ENCODE measurements at regions of chrX and their contacts with region 1.

Region 1: DNA sequence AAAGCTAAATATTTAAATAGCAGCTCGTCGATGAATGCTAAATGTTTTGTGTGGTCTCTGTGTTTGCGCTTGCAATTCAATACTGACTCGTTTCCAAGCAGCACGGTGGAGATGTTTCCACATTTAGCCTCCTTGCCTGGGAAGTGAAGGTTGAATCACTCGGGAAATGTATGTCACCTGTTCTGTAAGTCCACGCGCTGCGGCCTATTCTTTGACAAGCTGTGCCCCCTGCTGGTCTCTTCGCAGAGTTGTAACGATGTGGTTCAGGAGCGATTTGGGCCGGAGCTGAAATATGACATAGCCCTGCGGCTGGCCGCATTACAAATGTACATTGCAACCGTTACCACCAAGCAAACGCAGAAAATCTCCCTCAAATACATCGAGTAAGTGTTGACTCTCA is 89.6 kb upstream of the PRPS2 start:
- DNase-seq: peak; percentile 66
- ATAC-seq: peak; percentile 63
- H3K4me3 Mint-ChIP-seq: no peak overlapping the region
- H3K27ac Mint-ChIP-seq: no peak overlapping the region
- H3K4me1 Mint-ChIP-seq: no peaks in the 10 kb centered on the region
- H3K27me3 Mint-ChIP-seq: peaks cover 7% of the 10 kb centered on the region

Region 2: GRCh38 chrX:12080265-12080664 is 621.4 kb before region 1 on chrX:
- CTCF ChIA-PET with region 1: no interaction called
- POLR2A ChIA-PET with region 1: no interaction called
- intact Hi-C with region 1: loop called in 1 of 2 experiments (anchors 2 kb)
- DNase-seq: no peak
- ATAC-seq: no peak
- H3K4me3 Mint-ChIP-seq: no peak overlapping the region
- H3K27ac Mint-ChIP-seq: no peak overlapping the region
- H3K4me1 Mint-ChIP-seq: no peaks in the 10 kb centered on the region
- H3K27me3 Mint-ChIP-seq: peaks cover 6% of the 10 kb centered on the region

Region 3: DNA sequence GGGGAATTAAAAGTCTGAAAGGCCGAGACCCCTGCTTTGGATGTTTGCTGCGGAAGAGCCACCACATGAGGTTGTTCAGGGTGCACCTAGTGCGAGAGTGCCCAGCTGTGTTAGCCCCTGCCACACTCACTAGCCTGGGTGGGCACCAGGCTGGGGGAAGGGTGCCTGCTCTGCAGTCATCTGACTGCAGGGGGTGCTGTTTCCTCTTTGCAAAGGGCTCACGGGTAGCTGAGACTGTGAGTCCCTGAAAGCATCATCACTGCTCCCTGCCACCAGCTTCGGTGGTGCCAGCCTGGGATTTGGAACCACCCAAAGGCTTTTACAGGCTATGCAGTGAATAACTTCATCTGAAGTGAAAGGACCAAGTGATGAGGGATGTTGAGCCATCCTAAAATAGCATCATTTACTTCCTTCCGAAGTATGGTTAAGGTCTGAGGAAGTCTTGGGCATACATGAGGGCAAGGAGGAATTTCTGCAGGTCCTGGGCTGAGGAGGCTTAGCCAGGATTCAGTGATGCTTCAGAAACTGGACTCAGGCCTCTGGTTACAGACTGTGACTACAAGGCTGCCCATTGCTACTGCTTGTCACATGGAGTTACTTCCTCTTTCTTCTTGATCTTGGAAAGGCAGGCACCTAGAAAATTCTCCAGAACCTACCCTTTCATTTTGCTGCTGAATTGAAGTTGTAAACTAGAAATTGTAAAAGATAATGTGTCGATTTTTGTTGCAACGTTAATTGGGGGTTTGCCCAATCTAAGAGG is 203.6 kb before region 1 on chrX:
- CTCF ChIA-PET with region 1: no interaction called
- POLR2A ChIA-PET with region 1: no interaction called
- intact Hi-C with region 1: loop called in 1 of 2 experiments (anchors 1 kb)
- DNase-seq: peak; percentile 9
- ATAC-seq: no peak
- H3K4me3 Mint-ChIP-seq: no peak overlapping the region
- H3K27ac Mint-ChIP-seq: no peak overlapping the region
- H3K4me1 Mint-ChIP-seq: no peaks in the 10 kb centered on the region
- H3K27me3 Mint-ChIP-seq: no peaks in the 10 kb centered on the region

Region 4: DNA sequence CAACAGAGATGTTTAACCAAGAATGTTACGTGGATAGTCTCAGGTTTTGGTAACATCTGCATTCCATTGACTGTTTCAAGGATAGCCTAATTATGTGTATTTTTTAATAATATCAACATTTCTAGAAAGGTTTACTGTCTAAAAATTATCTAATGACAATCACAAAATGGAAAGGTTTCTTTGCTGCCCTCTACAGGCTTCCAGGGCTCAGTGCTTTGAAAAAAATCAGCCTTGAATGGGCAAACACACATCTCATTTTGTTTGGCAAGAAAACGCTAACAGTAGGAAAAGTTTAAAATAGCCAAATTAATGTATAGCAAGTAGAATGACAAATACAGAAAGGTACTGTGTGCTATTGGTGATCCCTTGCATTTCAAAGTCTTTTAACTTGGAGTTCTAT is 133.8 kb before region 1 on chrX:
- CTCF ChIA-PET with region 1: no interaction called
- POLR2A ChIA-PET with region 1: no interaction called
- intact Hi-C with region 1: loop called in 1 of 2 experiments (anchors 10 kb)
- DNase-seq: no peak
- ATAC-seq: no peak
- H3K4me3 Mint-ChIP-seq: no peak overlapping the region
- H3K27ac Mint-ChIP-seq: no peak overlapping the region
- H3K4me1 Mint-ChIP-seq: no peaks in the 10 kb centered on the region
- H3K27me3 Mint-ChIP-seq: no peaks in the 10 kb centered on the region

Region 5: DNA sequence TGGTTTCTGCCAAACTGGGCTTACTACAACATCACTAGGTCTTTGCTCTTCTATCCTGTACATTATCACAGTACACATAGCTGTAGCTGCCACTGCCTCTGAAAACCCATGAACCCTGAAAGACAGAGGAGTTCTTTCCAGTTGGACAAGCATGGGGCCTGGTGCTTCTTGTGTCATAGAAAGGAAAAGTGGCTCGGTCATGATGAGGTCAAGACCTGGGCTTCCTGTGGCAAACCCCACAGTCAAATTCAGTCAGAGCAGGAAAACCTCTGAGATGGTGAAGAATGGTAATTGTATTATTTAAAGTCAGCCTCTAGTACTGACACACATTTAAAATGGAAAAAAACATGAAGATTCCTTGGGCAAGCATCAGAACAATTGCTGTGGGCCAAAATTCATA is 43.7 kb before region 1 on chrX:
- CTCF ChIA-PET with region 1: no interaction called
- POLR2A ChIA-PET with region 1: no interaction called
- intact Hi-C with region 1: no loop called
- DNase-seq: no peak
- ATAC-seq: peak; percentile 16
- H3K4me3 Mint-ChIP-seq: no peak overlapping the region
- H3K27ac Mint-ChIP-seq: no peak overlapping the region
- H3K4me1 Mint-ChIP-seq: peaks cover 5% of the 10 kb centered on the region
- H3K27me3 Mint-ChIP-seq: no peaks in the 10 kb centered on the region

Region 6: GRCh38 chrX:12771445-12772069 is 69.9 kb after region 1 on chrX:
- CTCF ChIA-PET with region 1: interaction called, 5 read pairs
- POLR2A ChIA-PET with region 1: no interaction called
- intact Hi-C with region 1: loop called in 1 of 2 experiments (anchors 5 kb)
- DNase-seq: peak; percentile 85
- ATAC-seq: peak; percentile 100
- H3K4me3 Mint-ChIP-seq: no peak overlapping the region
- H3K27ac Mint-ChIP-seq: no peak overlapping the region
- H3K4me1 Mint-ChIP-seq: peaks cover 8% of the 10 kb centered on the region
- H3K27me3 Mint-ChIP-seq: peaks cover 5% of the 10 kb centered on the region

Region 7: GRCh38 chrX:12894074-12895030 is 192.7 kb after region 1 on chrX:
- CTCF ChIA-PET with region 1: interaction called, 4 read pairs
- POLR2A ChIA-PET with region 1: no interaction called
- intact Hi-C with region 1: loop called in 1 of 2 experiments (anchors 5 kb)
- DNase-seq: peak; percentile 67
- ATAC-seq: peak; percentile 28
- H3K4me3 Mint-ChIP-seq: no peak overlapping the region
- H3K27ac Mint-ChIP-seq: no peak overlapping the region
- H3K4me1 Mint-ChIP-seq: peaks cover 34% of the 10 kb centered on the region
- H3K27me3 Mint-ChIP-seq: no peaks in the 10 kb centered on the region

Region 8: DNA sequence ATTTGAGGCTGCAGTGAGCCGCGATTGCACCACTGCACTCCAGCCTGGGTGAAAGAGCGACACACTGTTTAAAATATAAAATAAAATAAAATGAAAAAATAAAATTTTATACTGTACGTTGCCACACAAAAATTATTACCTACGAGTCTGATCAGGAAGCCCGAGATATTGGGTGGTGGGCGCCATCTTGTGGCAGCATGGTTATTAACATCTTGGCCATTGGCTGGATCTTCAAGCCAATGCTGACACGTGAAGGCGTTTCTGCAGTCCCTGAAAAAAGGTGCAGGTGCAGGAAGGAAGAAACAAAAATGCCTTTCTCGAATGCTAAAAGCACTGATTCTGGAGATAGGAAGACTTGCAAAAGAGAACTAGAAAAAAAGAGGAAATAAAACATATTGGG is 199.9 kb after region 1 on chrX:
- CTCF ChIA-PET with region 1: interaction called, 4 read pairs
- POLR2A ChIA-PET with region 1: no interaction called
- intact Hi-C with region 1: loop called in 1 of 2 experiments (anchors 1 kb)
- DNase-seq: peak; percentile 81
- ATAC-seq: peak; percentile 61
- H3K4me3 Mint-ChIP-seq: no peak overlapping the region
- H3K27ac Mint-ChIP-seq: no peak overlapping the region
- H3K4me1 Mint-ChIP-seq: peaks cover 9% of the 10 kb centered on the region
- H3K27me3 Mint-ChIP-seq: no peaks in the 10 kb centered on the region

Region 9: DNA sequence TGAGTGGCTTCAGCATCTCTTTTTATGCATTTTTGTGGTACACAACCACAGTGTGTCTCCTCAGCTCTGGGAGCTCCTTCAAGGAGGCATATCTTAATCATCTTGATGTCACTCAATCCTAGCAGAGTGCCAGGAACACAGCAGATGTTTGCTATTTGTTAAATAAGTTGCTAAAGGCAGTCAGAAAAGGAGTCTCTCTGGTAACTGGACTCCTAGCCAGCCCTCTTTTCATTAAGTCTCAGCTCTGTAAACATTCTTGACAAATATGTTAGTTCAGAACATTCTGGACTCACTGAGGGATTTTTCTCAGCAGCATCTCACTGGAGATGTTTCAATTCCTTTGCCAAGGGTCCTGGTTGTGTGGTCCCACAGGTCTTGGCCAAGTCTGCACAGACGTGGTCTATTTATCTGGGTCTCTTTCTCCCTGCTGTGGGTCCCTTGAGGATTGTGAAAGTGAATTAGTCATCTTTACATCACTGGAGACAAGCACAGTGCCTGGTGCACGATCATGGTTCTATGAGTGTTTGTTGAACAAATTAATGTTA is 363.0 kb after region 1 on chrX:
- CTCF ChIA-PET with region 1: no interaction called
- POLR2A ChIA-PET with region 1: no interaction called
- intact Hi-C with region 1: no loop called
- DNase-seq: peak; percentile 15
- ATAC-seq: peak; percentile 57
- H3K4me3 Mint-ChIP-seq: no peak overlapping the region
- H3K27ac Mint-ChIP-seq: no peak overlapping the region
- H3K4me1 Mint-ChIP-seq: peaks cover 37% of the 10 kb centered on the region
- H3K27me3 Mint-ChIP-seq: no peaks in the 10 kb centered on the region